Activated CD4-positive, alpha-beta T cell treated with anti-CD3 and anti-CD28 coated beads, Interleukin-2, amount 10 ng/mL, durations not matched to agents 24 days and 14 days (primary cell): ENCODE measurements at regions of chr3 and their contacts with region 1.

Region 1: GRCh38 chr3:45864760-45865519 is 21.4 kb upstream of the CCR9 start:
- DNase-seq: peak; percentile 79
- H3K4me3 Mint-ChIP-seq: peak overlapping the region; percentile 46
- H3K27ac Mint-ChIP-seq: peak overlapping the region; percentile 39
- H3K4me1 Mint-ChIP-seq: peaks cover 41% of the 10 kb centered on the region
- H3K27me3 Mint-ChIP-seq: peaks cover 58% of the 10 kb centered on the region

Region 2: DNA sequence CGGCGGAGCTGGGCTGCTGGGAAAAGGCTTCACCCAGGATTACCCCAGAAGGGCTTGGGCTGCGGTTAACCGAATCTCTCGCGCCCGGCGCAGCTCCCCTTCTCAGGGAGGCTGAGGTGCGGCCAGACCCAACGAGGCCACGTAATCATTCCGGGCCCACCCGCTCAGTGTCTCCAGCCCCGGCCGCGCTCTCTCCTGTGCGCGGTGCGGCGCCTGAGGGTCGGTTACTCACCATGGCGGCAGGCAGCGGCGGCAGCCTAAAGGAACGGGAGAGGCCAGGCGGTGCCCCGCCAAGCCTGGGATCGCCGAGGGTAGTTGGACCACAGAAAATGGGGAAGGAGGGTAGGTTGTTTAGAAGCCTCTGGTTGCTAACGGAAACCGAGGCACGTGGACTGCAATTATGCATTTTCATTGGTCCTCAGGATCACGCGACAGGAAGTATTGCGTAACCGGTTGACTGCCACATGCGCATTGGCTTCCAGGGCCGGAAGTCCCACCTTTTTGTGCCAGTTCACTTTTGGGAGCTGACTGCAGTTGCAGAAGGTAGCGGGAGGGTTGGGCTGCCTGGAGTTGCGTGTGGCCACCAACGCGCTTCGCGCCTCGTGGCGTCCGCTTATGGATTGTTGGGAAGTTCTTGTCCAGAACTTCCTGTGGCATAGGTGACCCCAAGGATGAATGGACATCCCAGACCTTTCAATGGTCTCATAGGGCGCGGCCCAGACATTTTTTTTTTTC is 23.0 kb before region 1 on chr3 and contains the start of gene LZTFL1:
- intact Hi-C with region 1: loop called (anchors 2 kb)
- DNase-seq: peak; percentile 96
- H3K4me3 Mint-ChIP-seq: peak within 1 kb of the TSS; percentile 94
- H3K27ac Mint-ChIP-seq: peak within 1 kb of the TSS; percentile 86
- H3K4me1 Mint-ChIP-seq: peaks cover 19% of the 10 kb centered on the region
- H3K27me3 Mint-ChIP-seq: peaks cover 52% of the 10 kb centered on the region
- total RNA-seq, gene LZTFL1: 3.1 and 4.3 TPM in 2 replicates

Region 3: DNA sequence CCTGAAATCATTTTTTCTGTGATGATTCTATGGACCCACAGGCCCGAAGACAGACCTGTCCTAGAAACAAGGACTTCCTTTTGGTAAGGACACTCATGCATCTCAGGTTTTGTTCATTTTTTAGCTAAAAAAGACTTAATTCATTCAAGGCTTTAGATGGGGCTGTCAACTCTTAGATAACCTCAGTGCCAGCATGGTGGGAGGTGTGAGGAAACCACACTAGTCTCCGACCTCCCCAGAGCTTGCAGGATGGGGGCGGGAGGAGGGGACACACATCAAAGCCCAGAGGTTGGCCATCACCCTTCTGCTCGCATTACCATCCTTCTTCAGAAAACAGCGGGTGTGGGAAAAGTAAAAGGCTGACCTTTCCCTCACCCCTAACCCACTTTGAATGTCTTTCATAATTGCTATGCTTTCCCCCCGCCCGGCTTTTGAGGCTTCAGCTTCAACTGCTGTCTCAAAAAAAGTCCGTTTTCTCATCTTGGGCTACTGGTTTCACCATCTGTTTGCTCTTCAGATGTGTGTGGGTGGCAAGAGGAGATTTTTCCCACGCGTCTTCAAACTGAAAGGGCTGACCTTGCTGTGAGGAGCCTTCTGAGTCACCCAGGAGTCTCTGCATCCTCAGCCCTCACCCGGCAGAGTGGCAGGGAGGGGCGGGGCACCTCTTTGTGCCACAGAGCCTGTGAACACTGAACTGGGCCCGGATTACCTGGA is 50.7 kb after region 1 on chr3:
- intact Hi-C with region 1: loop called (anchors 1 kb)
- DNase-seq: peak; percentile 89
- H3K4me3 Mint-ChIP-seq: peak overlapping the region; percentile 23
- H3K27ac Mint-ChIP-seq: peak overlapping the region; percentile 49
- H3K4me1 Mint-ChIP-seq: peaks cover 29% of the 10 kb centered on the region
- H3K27me3 Mint-ChIP-seq: peaks cover 25% of the 10 kb centered on the region

Region 4: GRCh38 chr3:46070595-46071093 is 205.7 kb after region 1 on chr3:
- intact Hi-C with region 1: loop called (anchors 2 kb)
- DNase-seq: no peak
- H3K4me3 Mint-ChIP-seq: peak overlapping the region; percentile 47
- H3K27ac Mint-ChIP-seq: peak overlapping the region; percentile 68
- H3K4me1 Mint-ChIP-seq: peaks cover 58% of the 10 kb centered on the region
- H3K27me3 Mint-ChIP-seq: peaks cover 39% of the 10 kb centered on the region

Region 5: GRCh38 chr3:46378426-46378942 is 513.5 kb after region 1 on chr3:
- intact Hi-C with region 1: loop called (anchors 10 kb)
- DNase-seq: peak; percentile 90
- H3K4me3 Mint-ChIP-seq: no peak overlapping the region
- H3K27ac Mint-ChIP-seq: peak overlapping the region; percentile 57
- H3K4me1 Mint-ChIP-seq: peaks cover 42% of the 10 kb centered on the region
- H3K27me3 Mint-ChIP-seq: peaks cover 23% of the 10 kb centered on the region